ENCODE measurements at regions of chr1 and their contacts with region 1.

Region 1: DNA sequence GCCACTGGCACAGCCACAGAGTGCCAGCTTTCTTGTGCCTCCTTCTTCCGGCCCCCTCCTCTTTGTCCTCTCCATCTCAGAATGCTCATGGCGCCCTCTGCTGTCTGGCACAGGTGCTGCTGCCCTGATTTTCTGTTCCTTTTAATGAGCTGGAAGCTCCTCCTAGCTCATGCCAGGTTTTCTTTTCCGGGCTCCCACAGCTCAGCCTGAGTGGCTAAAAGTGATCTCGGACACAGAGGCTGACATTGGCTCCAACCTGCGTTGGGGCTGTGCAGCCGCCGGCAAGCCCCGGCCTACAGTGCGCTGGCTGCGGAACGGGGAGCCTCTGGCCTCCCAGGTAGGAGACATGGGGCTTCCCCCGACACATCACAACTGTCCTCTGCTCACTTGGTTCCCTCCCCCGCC is 18.7 kb downstream of the CNTN2 start:
- DNase-seq: peak; percentile 81
- CTCF ChIP-seq: peak; percentile 96

Region 2: DNA sequence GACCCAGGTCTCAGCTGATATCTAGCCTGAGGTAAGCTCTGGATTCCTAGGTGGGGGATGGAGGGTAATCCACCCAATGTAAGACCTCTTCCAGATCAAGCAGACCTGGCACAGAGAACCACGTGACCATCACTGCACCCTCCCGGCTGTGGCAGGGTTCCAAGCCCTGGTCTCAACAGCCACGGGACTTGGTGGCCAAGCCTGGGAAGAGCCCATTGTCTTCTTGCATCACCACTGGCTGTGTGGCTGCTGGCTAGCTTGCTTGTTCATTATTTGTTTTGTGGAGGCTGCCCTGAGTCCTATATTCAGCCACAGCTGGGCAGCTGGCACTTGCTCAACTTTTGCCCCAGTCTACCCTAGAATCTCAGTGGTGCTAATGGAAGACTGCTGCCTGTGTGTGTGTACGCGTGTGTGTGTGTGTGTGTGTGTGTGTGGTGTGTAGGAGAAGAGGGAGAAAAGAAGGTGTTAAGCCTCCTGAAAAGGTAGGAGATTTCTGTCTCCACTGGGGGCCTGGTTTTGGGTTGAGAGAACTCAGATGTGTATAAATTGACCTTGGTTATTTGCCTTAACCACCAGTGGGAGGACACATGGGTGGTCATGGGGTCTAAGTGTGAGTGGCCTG is 215.0 kb before region 1 on chr1:
- CTCF ChIA-PET with region 1: no interaction called
- POLR2A ChIA-PET with region 1: no interaction called
- DNase-seq: no peak
- CTCF ChIP-seq: no peak

Region 3: GRCh38 chr1:204915861-204916495 is 145.7 kb before region 1 on chr1:
- CTCF ChIA-PET with region 1: no interaction called
- POLR2A ChIA-PET with region 1: no interaction called
- DNase-seq: no peak
- CTCF ChIP-seq: no peak

Region 4: GRCh38 chr1:204975570-204976235 is 86.0 kb before region 1 on chr1:
- CTCF ChIA-PET with region 1: interaction called, 80 read pairs
- POLR2A ChIA-PET with region 1: no interaction called
- DNase-seq: peak; percentile 83
- CTCF ChIP-seq: peak; percentile 92

Region 5: DNA sequence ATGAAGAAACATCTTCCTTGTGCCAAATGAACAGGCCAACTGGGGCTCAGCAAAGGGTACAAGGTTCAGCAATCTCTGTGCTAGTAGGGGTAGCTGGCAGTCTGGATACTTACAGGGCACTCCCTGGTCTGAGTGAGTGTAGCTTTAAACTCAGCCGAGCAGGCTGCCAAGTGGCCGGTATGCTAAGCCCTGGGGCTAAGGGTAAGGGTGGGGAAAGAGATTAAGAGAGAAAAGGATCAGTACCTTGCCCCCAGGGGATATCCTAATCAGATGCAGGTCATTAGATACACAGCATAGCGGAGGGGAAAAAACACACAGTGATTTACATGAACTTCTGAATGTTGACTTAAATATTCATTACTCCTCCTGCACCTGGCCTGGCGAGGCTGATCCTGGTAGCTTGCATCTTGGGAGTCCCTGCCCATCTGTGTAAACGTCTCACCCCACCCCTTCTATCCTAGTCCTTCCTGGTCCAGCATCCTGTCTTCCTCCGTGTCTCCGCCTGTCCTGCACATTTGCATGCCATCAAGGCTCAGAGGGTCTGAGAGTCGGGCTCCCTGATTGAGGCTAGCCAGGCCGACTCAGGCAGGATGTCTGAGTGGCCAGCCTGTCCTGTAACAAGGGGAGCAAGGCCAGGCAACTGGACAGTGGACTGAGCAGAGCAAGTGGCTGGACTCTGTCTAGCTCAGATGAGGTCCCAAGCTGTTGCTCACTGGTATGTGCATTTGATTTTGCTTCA is 58.1 kb before region 1 on chr1:
- CTCF ChIA-PET with region 1: interaction called, 18 read pairs
- POLR2A ChIA-PET with region 1: no interaction called
- DNase-seq: no peak
- CTCF ChIP-seq: no peak

Region 6: DNA sequence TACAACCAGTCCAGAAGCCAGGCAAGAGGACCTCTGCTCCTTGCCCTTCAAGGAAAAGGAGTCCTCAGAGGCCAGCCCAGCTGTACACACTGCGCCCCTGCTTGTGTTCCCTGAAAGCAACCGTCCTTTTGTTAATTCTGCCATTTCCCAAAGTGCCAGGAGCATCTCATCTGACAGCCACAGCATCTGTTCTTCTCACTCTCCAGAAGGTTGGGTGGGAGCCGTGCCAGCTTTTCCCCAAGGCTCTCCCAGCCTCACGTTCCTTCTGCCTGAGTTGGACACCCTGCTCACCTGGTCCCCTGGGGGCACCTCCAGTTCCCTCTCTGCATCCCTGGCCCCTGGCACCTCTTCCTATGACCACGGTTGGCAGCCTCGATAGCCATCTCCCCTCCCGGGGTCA is 29.2 kb before region 1 on chr1:
- CTCF ChIA-PET with region 1: interaction called, 10 read pairs
- POLR2A ChIA-PET with region 1: no interaction called
- DNase-seq: no peak
- CTCF ChIP-seq: no peak

Region 7: DNA sequence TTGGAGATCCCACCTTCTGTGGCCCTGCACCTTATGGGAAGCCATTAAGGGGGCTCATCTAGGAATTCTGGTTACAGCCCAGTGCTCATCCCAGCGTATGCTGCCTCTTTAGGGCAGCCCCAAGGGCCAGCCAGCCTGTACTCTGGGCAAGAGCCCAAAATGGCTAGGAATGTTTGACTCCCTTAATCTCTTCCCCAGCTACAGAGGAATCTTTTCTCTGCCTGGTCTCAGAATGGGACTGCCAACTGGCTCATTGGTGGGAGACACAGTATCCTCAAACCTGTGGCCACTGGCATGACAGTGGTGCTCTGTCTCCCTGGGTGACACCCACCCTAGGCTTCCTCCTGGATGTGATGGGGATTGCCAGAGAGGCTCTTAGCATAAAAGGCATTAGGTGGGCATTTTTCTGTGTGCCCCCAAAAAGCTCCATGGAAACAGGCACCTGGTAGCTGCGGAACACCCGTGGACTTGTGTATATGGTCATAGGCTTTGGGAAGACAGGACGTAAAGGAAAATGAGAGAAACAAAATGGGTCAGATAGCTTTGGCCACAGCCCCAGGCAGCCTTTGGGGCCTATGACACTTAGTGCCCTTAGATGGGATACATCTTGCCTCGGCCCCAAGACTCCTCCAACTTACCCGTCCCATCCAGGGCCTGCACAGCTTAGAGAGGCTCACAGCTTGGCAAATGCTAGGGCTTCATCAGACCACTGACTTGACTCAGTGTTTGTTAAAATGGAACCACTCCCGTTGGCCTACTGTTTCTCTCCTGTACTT is 15.7 kb after region 1 on chr1:
- CTCF ChIA-PET with region 1: interaction called, 78 read pairs
- POLR2A ChIA-PET with region 1: no interaction called
- DNase-seq: no peak
- CTCF ChIP-seq: no peak

Region 8: DNA sequence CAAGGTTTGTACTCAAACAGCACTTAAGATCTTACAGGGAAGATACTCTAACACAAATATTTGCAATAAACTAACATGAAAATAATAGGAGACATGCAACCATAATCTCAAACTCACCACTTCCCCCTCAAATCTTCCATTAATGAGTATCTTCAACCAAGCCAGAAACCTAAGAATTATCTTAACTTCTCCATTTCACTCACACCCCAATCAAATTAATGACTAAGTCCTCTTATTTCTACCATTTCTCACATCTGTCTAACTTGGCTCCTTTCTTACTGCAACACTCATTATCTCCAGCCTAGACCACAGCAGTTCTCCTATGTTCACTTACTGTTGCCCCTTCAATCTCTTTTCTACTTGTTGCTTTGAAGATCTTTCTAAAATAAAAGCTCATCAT is 49.7 kb after region 1 on chr1:
- CTCF ChIA-PET with region 1: interaction called, 14 read pairs
- POLR2A ChIA-PET with region 1: no interaction called
- DNase-seq: no peak
- CTCF ChIP-seq: no peak

Region 9: GRCh38 chr1:205255941-205256780 is 194.5 kb after region 1 on chr1:
- CTCF ChIA-PET with region 1: interaction called, 20 read pairs
- POLR2A ChIA-PET with region 1: no interaction called
- DNase-seq: peak; percentile 83
- CTCF ChIP-seq: peak; percentile 93

Measured in GM10248 (cell line).